GM18951 (cell line): ENCODE measurements at regions of chr3 and their contacts with region 1.

Region 1: DNA sequence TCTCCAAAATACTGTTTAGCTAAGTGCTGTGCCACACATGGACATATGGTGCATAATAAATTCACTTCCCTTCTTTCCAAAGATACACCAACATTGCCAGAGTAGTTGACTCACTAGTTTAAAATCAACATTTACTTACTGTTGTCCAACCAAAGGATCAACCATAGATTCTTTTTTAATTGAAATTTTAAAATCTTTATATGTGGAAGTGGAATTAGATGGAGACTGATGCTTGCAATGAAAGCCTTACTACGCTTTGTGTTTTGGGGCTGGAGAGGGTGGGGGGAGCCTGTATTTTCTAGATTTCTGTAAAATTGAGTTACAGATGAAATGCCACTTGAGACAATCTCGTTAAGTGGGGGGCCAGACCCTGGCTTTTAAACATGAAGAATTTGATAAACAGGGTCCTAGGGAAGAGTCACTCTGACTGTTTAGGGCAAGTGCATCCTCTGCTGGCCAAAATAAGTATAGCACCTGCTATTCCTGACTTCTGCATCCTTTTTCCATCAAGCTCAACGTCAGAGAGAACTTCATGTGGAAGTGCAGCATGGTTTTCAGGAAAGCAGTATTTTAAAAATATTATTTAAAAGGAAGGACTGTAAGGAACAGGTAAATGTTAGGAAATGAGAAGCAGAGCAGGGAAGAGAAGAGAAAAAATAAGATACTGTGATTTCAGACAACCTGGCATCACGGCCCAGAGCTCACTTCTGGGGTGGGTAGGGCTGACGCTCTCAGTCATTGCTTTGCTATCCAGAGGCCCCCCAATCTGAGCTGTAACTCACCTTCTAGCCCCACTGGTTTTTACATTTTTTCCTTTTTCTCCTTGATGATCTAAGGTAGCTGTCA is 76.7 kb downstream of the BOC start:
- POLR2A ChIP-seq: no peak

Region 2: GRCh38 chr3:112642912-112643506 is 645.0 kb before region 1 on chr3:
- in situ Hi-C with region 1: loop called (anchors 25 kb)
- POLR2A ChIP-seq: no peak

Region 3: GRCh38 chr3:113051302-113051711 is 236.7 kb before region 1 on chr3:
- in situ Hi-C with region 1: loop called (anchors 10 kb)
- POLR2A ChIP-seq: no peak

Region 4: GRCh38 chr3:113249111-113249510 is 38.9 kb before region 1 on chr3:
- in situ Hi-C with region 1: no loop called
- POLR2A ChIP-seq: no peak